PC-3 (cell line): ENCODE measurements at regions of chr6 and their contacts with region 1.

Region 1: GRCh38 chr6:32113386-32114352 is 4.5 kb upstream of the TNXB start:
- DNase-seq: peak; percentile 85
- ATAC-seq: peak; percentile 69
- H3K4me3 ChIP-seq: no peak overlapping the region
- H3K27ac ChIP-seq: peak overlapping the region; percentile 88
- H3K4me1 ChIP-seq: peaks cover 33% of the 10 kb centered on the region
- H3K27me3 ChIP-seq: no peaks in the 10 kb centered on the region
- CTCF ChIP-seq: peak; percentile 54

Region 2: DNA sequence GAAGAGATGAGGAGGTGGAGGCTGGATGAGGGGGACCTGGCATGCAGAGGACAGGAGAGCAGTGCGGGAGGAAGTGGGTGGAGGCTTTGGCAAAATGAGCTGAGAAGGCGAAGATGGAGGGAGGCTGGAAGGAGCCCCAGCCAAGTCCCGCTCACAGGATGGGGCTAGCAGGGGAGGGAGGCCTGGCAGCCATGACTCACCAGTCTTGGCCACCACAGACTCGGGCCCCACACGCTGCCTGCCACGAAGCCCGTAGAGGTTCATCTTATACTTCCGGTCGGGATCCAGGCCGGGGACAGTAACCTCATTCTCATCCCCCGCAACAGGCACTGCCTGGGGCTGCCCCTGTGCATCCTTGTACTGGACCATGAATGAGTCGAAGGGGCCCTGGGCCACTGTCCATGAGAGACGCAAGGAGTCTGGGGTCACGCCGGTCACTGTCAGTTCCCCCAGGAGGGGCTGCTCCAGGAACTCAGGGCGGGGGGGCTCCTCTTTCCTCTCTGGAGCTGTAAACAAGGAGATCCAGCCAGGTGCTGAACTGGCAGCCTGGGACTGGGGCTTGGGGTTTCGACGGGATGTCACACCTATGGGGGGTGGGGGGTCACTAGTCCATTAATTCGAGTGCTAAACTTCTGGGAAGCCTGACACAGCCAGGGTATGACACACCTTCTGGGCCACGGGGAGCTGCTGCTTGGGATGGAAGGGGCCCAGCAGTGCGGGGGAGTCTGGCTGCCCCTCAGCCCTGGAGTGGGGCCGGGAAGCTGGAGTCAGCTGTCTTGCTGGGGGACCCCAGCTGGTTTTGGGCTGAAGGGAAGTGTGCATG is 32.3 kb before region 1 on chr6:
- CTCF ChIA-PET with region 1: interaction called, 5 read pairs
- POLR2A ChIA-PET with region 1: interaction called, 16 read pairs
- intact Hi-C with region 1: no loop called
- DNase-seq: peak; percentile 74
- ATAC-seq: peak; percentile 53
- H3K4me3 ChIP-seq: no peak overlapping the region
- H3K27ac ChIP-seq: 0 out of 2 replicates have a peak overlapping the region, but pooled peaks have one; percentile 73
- H3K4me1 ChIP-seq: peaks cover 54% of the 10 kb centered on the region
- H3K27me3 ChIP-seq: no peaks in the 10 kb centered on the region
- CTCF ChIP-seq: no peak

Region 3: DNA sequence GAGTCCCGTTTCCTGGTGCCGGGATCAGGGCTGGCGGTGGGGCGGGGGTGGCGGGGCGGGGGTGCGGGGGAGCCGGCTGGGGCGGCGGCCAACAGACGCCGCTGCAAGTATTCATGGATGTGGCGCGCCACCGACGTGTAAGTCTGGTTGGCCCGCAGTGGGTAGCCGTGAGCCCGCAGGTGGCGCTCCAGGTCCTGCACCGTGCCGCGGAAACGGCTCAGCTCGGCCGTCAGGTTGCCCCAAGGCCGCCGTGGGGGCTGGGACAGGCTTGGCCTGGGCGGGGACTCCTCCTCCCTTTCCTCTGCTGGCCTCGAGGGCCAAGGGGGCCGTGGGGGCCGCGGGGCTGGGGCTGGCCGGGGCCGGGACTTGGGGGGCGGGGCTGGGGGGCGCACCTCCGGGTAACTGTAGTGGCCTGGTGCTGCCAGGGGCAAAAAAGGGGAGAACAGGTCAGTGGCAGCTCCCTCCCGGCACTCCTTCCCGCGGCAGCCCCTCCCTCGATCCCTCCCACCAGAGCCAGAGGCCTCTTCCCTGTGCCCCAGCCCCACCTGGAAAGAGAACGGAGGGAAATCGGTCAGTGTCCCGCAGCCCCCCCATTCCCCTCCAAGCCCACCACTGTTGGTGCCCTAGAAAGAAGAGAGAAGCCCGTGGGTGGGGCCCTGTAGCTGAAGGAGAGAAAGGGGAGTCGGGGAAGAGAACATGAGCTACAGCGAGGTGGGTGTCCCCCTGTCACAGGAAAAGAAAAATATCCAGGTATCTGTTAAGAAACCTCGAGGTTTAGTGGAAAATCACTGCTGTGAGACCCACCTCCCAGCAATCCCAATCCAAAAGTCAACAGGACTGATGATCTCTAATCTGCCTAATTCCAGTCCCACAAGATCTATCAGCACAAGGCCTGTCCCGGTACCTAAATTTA is 25.8 kb before region 1 on chr6:
- CTCF ChIA-PET with region 1: interaction called, 5 read pairs
- POLR2A ChIA-PET with region 1: no interaction called
- intact Hi-C with region 1: loop called (anchors 1 kb)
- DNase-seq: peak; percentile 88
- ATAC-seq: peak; percentile 71
- H3K4me3 ChIP-seq: no peak overlapping the region
- H3K27ac ChIP-seq: no peak overlapping the region
- H3K4me1 ChIP-seq: peaks cover 31% of the 10 kb centered on the region
- H3K27me3 ChIP-seq: no peaks in the 10 kb centered on the region
- CTCF ChIP-seq: peak; percentile 54

Region 4: DNA sequence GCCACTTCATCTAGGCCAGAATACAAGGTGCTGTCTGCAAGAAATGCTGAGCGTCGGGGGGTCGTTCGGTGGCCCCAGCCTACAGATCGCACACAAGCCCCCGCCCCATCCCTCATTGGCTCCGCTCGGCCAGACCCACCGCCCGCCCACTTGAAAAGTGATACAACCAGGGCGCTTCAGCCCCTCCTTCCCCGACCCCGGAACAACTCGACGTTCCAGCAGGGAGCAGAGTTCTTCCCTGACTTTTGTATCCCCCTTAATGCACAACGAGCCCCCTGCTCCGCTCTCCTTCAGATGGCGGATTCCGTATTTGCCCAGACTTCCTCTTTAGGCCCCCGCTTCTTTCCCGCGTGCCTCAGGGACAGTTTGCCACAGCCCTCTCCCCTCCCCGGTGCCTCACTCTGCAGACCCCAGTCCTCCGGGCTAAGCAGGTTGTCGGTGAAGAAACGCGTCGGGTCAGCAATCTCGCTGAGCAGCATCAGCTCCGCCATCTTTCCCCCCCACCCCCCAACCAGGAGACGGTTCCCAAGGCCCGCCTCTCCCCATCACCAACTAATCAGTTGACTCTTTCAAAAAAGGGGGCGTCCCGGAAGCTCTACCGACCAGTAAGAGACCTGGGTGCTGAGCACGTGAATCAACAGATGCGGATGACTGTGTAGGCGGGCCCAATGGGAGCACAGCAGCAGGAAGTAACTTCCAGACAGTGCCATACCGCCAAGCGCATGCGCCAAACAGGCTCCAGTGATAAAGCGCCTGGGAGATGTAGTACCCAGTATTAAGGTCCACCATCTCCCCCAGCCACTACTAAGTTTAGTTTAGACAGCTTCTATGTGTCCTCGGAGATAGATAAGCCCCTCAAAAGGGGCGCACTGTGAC is 14.3 kb after region 1 on chr6 and contains the start of gene ATF6B:
- CTCF ChIA-PET with region 1: interaction called, 5 read pairs
- POLR2A ChIA-PET with region 1: interaction called, 24 read pairs
- intact Hi-C with region 1: loop called (anchors 2 kb)
- DNase-seq: peak; percentile 98
- ATAC-seq: peak; percentile 89
- H3K4me3 ChIP-seq: peak within 1 kb of the TSS; percentile 90
- H3K27ac ChIP-seq: peak within 1 kb of the TSS; percentile 47
- H3K4me1 ChIP-seq: peaks cover 25% of the 10 kb centered on the region
- H3K27me3 ChIP-seq: no peaks in the 10 kb centered on the region
- CTCF ChIP-seq: no peak
- total RNA-seq, gene ATF6B: 33.4 and 35.7 TPM in 2 replicates